ENCODE measurements at regions of chr15 and their contacts with region 1.

Region 1: GRCh38 chr15:82648257-82649103 is 1.3 kb upstream of the CPEB1 start:
- DNase-seq: peak in 1 of 2 experiments; percentile 82
- H3K4me3 ChIP-seq: peak overlapping the region; percentile 24 to 52 (median 36); a peak in 7 of 8 replicates
- H3K27ac ChIP-seq: no peak overlapping the region
- H3K4me1 ChIP-seq: peaks cover 0 to 5% (median 3%) of the 10 kb centered on the region in 4 experiments; a peak in 4 of 7 replicates
- H3K27me3 ChIP-seq: peaks cover 27 to 55% (median 50%) of the 10 kb centered on the region in 4 experiments
- CTCF ChIP-seq: peak; percentile 25 to 46 (median 31); a peak in 2 of 4 replicates
- EP300 ChIP-seq: no peak
- POLR2A ChIP-seq: no peak
- RAD21 ChIP-seq: peak; percentile 4 to 26; a peak in 1 of 4 replicates

Region 2: DNA sequence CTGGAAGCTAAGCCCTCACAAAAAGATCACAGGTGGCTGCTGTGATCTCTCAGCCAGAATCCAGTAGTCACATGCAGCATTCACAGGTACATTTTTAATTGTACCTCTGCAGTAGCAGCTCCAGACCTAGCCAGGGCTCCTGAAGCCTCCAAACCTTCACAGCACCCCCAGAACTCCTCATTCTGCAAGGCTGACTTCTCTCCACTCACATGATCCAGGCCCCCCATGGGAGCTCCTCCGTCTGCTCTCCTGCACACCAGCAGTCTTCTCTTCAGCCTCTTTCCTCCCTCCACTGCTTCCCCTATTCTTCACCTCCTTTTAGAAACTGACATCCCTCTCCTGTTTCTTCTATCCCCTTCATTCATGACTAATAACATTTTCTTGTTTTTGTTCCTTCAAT is 11.9 kb after region 1 on chr15:
- CTCF ChIA-PET with region 1: interaction called, 12 read pairs
- POLR2A ChIA-PET with region 1: no interaction called
- DNase-seq: no peak
- H3K4me3 ChIP-seq: no peak overlapping the region
- H3K27ac ChIP-seq: no peak overlapping the region
- H3K4me1 ChIP-seq: no peaks in the 10 kb centered on the region
- H3K27me3 ChIP-seq: no peaks in the 10 kb centered on the region; a peak in 3 of 7 replicates
- CTCF ChIP-seq: no peak
- EP300 ChIP-seq: no peak
- POLR2A ChIP-seq: no peak
- RAD21 ChIP-seq: no peak

Measured in H1 (cell line).